WTC11 (cell line): ENCODE measurements at regions of chr16 and their contacts with region 1.

Region 1: GRCh38 chr16:80526425-80527061 is 14.2 kb upstream of the DYNLRB2 start:
- DNase-seq: peak; percentile 50
- ATAC-seq: peak; percentile 85
- H3K4me3 Mint-ChIP-seq: 0 out of 2 replicates have a peak overlapping the region, but pooled peaks have one; percentile 24
- H3K27ac Mint-ChIP-seq: no peak overlapping the region
- H3K4me1 Mint-ChIP-seq: peaks cover 7% of the 10 kb centered on the region; the same call in 1 of the 2 replicates
- H3K27me3 Mint-ChIP-seq: no peaks in the 10 kb centered on the region; the same call in 1 of the 2 replicates
- CTCF ChIP-seq: peak; percentile 65

Region 2: GRCh38 chr16:80515374-80515773 is 11.2 kb before region 1 on chr16:
- CTCF ChIA-PET with region 1: interaction called, 12 read pairs
- POLR2A ChIA-PET with region 1: no interaction called
- DNase-seq: no peak
- ATAC-seq: peak; percentile 59
- H3K4me3 Mint-ChIP-seq: no peak overlapping the region
- H3K27ac Mint-ChIP-seq: no peak overlapping the region
- H3K4me1 Mint-ChIP-seq: peaks cover 29% of the 10 kb centered on the region
- H3K27me3 Mint-ChIP-seq: no peaks in the 10 kb centered on the region
- CTCF ChIP-seq: no peak

Region 3: DNA sequence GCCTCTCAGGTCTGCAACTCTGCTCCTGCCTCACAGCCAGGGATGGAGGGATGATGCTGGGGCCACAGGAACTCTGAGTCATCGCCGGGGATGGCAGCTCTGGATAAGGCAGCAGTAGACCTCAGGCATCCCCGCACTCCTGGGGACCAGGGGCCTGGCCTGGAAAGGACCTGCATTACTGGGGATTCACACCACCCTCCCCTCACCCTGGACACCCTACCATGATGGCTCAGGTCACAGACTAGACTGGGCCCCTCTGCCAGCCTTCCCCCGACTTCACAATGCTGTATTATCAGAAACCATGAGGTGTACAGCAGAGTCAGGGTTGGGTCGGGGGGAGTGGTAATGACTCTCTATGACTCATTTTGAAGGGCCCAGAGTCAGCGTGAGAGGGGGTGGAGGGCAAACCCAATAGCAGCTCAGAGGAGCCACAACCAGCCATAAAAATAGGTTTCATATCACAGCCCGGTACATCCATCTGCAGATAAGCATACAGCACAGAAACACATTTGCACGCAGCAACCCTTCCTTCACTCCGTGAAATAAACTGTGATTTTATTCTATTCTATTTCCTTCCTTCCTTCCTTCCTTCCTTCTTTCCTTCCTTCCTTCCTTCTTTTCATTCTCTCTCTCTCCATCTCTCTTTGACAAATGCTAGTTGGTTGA is 43.0 kb after region 1 on chr16:
- CTCF ChIA-PET with region 1: no interaction called
- POLR2A ChIA-PET with region 1: no interaction called
- DNase-seq: no peak
- ATAC-seq: no peak
- H3K4me3 Mint-ChIP-seq: no peak overlapping the region
- H3K27ac Mint-ChIP-seq: no peak overlapping the region
- H3K4me1 Mint-ChIP-seq: peaks cover 7% of the 10 kb centered on the region
- H3K27me3 Mint-ChIP-seq: no peaks in the 10 kb centered on the region; the same call in 1 of the 2 replicates
- CTCF ChIP-seq: no peak

Region 4: GRCh38 chr16:80591071-80591915 is 64.8 kb after region 1 on chr16:
- CTCF ChIA-PET with region 1: no interaction called
- POLR2A ChIA-PET with region 1: no interaction called
- DNase-seq: no peak
- ATAC-seq: no peak
- H3K4me3 Mint-ChIP-seq: no peak overlapping the region
- H3K27ac Mint-ChIP-seq: no peak overlapping the region
- H3K4me1 Mint-ChIP-seq: no peaks in the 10 kb centered on the region
- H3K27me3 Mint-ChIP-seq: no peaks in the 10 kb centered on the region; the same call in 1 of the 2 replicates
- CTCF ChIP-seq: no peak

Region 5: DNA sequence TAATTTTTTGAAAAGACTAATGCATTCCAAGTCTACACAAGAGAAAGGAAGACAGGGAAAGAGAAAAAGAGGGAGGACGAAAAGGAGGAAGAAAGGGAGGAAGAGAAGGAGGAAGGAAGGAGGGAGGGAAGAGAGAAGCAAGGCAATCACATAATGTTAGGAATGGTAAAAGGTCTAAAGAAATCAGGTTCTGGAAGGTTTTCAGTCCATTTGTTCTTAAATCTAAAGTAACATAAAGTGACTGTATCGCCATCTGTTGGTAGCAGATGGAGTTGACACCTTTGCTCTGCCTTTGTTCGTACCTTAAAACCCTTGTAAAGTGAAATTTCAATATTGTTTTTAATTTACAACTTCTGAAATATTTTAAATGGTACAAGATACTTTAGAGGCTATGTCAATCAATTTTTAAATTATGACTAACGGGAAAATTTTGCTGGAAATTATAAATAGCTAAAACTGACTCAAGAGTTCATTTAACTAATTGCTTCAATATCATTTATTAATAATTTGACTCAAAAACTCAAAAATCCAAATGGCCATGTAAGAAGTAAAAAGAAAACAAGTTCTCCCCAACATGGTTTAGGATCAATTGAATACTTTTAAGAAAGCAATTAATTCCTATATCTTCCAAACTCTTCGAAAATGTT is 298.3 kb after region 1 on chr16:
- CTCF ChIA-PET with region 1: interaction called, 16 read pairs
- POLR2A ChIA-PET with region 1: no interaction called
- DNase-seq: peak; percentile 17
- ATAC-seq: peak; percentile 52
- H3K4me3 Mint-ChIP-seq: no peak overlapping the region
- H3K27ac Mint-ChIP-seq: no peak overlapping the region; the same call in 1 of the 2 replicates
- H3K4me1 Mint-ChIP-seq: no peaks in the 10 kb centered on the region
- H3K27me3 Mint-ChIP-seq: peaks cover 2% of the 10 kb centered on the region; the same call in 1 of the 2 replicates
- CTCF ChIP-seq: peak; percentile 60